ENCODE measurements at regions of chr1 and their contacts with region 1.

Region 1: GRCh38 chr1:78126506-78126905 is 80.7 kb downstream of the GIPC2 start:
- DNase-seq: no peak
- H3K4me3 ChIP-seq: no peak overlapping the region
- H3K4me3 Mint-ChIP-seq: no peak overlapping the region
- H3K27ac Mint-ChIP-seq: no peak overlapping the region
- H3K4me1 ChIP-seq: no peaks in the 10 kb centered on the region
- H3K4me1 Mint-ChIP-seq: no peaks in the 10 kb centered on the region
- H3K27me3 ChIP-seq: no peaks in the 10 kb centered on the region
- H3K27me3 Mint-ChIP-seq: no peaks in the 10 kb centered on the region
- CTCF ChIP-seq: no peak

Region 2: GRCh38 chr1:78045926-78046778 is 80.4 kb before region 1 on chr1 and contains the start of gene GIPC2:
- CTCF ChIA-PET with region 1: no interaction called
- POLR2A ChIA-PET with region 1: no interaction called
- intact Hi-C with region 1: no loop called
- DNase-seq: peak; percentile 58 to 62
- H3K4me3 ChIP-seq: peak within 1 kb of the TSS; percentile 82
- H3K4me3 Mint-ChIP-seq: peak within 1 kb of the TSS; percentile 77
- H3K27ac Mint-ChIP-seq: peak within 1 kb of the TSS; percentile 70
- H3K4me1 ChIP-seq: 0 out of 2 replicates have a peak, but pooled peaks cover 3% of the 10 kb centered on the region
- H3K4me1 Mint-ChIP-seq: peaks cover 7% of the 10 kb centered on the region
- H3K27me3 ChIP-seq: no peaks in the 10 kb centered on the region
- H3K27me3 Mint-ChIP-seq: no peaks in the 10 kb centered on the region
- CTCF ChIP-seq: peak in 1 of 2 experiments; percentile 6
- total RNA-seq, gene GIPC2: 4.3 and 4.4 TPM in 2 replicates

Region 3: DNA sequence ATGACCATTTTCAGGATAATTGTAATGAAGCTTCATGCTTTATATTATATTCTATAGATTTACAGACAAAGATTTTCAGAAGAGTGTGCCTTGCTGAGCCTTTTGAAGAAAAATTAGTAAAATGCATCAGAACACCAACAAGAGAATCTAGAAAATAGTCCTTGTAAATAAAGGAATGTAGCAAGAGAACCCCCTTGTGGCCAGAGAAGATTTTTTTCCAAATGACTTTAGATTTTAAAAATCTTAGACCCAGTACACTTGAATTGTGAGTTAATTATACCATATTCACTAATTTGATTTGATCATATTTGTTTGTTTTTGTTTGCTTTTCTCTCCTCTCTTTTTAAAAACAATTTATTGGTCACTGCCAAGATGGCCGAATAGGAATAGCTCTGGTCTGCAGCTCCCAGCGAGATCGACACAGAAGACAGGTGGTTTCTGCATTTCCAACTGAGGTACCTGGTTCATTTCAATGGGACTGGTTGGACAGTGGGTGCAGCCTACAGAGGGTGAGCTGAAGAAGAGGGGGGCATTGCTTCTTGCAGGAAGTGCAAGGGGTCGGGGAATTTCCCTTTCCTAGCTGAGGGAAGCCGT is 480.9 kb after region 1 on chr1:
- CTCF ChIA-PET with region 1: interaction called, 3 read pairs
- POLR2A ChIA-PET with region 1: no interaction called
- intact Hi-C with region 1: loop called (anchors 1 kb)
- DNase-seq: no peak
- H3K4me3 ChIP-seq: no peak overlapping the region
- H3K4me3 Mint-ChIP-seq: peak overlapping the region; percentile 29
- H3K27ac Mint-ChIP-seq: no peak overlapping the region
- H3K4me1 ChIP-seq: no peaks in the 10 kb centered on the region
- H3K4me1 Mint-ChIP-seq: no peaks in the 10 kb centered on the region
- H3K27me3 ChIP-seq: no peaks in the 10 kb centered on the region
- H3K27me3 Mint-ChIP-seq: peaks cover 9% of the 10 kb centered on the region
- CTCF ChIP-seq: peak; percentile 11 to 23

Measured in Caco-2 (cell line).